Activated CD4-positive, alpha-beta memory T cell treated with anti-CD3 and anti-CD28 coated beads for 36 hours (primary cell): ENCODE measurements at regions of chr11 and their contacts with region 1.

Region 1: GRCh38 chr11:3854977-3855807 is at the start of gene STIM1:
- DNase-seq: peak; percentile 99
- H3K4me3 Mint-ChIP-seq: peak within 1 kb of the TSS; percentile 85
- H3K27ac Mint-ChIP-seq: peak within 1 kb of the TSS; percentile 99
- H3K4me1 Mint-ChIP-seq: peaks cover 53% of the 10 kb centered on the region
- H3K27me3 Mint-ChIP-seq: no peaks in the 10 kb centered on the region
- total RNA-seq, gene STIM1: 55.9 to 61.1 TPM

Region 2: DNA sequence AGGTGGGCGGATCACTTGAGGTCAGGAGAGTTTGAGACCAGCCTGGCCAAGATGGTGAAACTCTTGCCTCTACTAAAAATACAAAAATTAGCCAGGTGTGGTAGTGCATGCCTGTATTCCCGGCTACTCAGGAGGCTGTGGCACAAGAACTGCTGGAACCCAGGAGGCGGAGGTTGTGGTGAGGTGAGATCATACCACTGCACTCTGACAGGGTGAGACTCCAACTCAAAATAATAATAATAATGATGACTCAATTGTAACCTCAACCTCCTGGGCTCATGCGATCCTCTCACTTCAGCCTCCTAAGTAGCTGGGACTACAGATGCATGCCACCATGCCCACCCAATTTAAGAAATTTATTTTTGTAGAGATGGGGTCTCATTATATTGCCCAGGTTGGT is 168.4 kb before region 1 on chr11:
- CTCF ChIA-PET with region 1: no interaction called
- POLR2A ChIA-PET with region 1: no interaction called
- intact Hi-C with region 1: no loop called
- DNase-seq: no peak
- H3K4me3 Mint-ChIP-seq: no peak overlapping the region
- H3K27ac Mint-ChIP-seq: no peak overlapping the region
- H3K4me1 Mint-ChIP-seq: peaks cover 7% of the 10 kb centered on the region
- H3K27me3 Mint-ChIP-seq: no peaks in the 10 kb centered on the region

Region 3: GRCh38 chr11:3831378-3832239 is 23.6 kb before region 1 on chr11:
- CTCF ChIA-PET with region 1: interaction called, 245 read pairs
- POLR2A ChIA-PET with region 1: interaction called, 124 read pairs
- intact Hi-C with region 1: no loop called
- DNase-seq: peak; percentile 33
- H3K4me3 Mint-ChIP-seq: peak overlapping the region; percentile 53
- H3K27ac Mint-ChIP-seq: peak overlapping the region; percentile 92
- H3K4me1 Mint-ChIP-seq: peaks cover 75% of the 10 kb centered on the region
- H3K27me3 Mint-ChIP-seq: no peaks in the 10 kb centered on the region

Region 4: DNA sequence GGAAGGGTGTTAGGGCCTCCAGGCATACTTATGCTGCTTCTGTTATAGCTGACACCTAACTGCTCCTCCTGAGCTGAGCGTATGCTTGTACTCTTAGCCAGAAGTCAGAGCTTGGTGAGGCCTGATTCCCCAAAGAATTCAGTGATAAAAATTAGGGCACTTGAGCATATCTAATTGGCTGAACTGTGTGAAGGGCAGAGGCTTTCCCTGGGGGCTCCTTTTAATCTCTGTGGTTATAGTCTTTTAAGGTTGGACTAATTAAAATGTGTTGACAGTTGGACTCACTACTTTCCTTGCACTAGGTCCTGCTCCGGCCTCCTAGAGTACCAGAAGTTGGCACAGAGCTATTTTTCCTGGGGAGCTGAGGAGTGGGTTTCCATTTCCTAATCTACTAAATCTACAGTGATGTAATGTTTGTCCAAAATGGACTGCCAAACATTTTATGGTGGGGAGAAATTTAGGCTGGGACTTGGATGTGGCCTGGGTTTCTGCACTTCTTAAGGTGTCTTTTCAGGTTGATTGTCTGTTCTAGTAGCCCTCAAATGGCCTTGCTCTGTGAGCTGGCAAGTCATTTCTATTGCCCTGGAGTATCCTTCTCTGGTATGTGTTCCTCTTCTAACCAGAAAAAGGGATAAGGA is 18.6 kb after region 1 on chr11:
- CTCF ChIA-PET with region 1: interaction called, 58 read pairs
- POLR2A ChIA-PET with region 1: interaction called, 15 read pairs
- intact Hi-C with region 1: loop called (anchors 2 kb)
- DNase-seq: no peak
- H3K4me3 Mint-ChIP-seq: no peak overlapping the region
- H3K27ac Mint-ChIP-seq: no peak overlapping the region
- H3K4me1 Mint-ChIP-seq: peaks cover 66% of the 10 kb centered on the region
- H3K27me3 Mint-ChIP-seq: no peaks in the 10 kb centered on the region

Region 5: DNA sequence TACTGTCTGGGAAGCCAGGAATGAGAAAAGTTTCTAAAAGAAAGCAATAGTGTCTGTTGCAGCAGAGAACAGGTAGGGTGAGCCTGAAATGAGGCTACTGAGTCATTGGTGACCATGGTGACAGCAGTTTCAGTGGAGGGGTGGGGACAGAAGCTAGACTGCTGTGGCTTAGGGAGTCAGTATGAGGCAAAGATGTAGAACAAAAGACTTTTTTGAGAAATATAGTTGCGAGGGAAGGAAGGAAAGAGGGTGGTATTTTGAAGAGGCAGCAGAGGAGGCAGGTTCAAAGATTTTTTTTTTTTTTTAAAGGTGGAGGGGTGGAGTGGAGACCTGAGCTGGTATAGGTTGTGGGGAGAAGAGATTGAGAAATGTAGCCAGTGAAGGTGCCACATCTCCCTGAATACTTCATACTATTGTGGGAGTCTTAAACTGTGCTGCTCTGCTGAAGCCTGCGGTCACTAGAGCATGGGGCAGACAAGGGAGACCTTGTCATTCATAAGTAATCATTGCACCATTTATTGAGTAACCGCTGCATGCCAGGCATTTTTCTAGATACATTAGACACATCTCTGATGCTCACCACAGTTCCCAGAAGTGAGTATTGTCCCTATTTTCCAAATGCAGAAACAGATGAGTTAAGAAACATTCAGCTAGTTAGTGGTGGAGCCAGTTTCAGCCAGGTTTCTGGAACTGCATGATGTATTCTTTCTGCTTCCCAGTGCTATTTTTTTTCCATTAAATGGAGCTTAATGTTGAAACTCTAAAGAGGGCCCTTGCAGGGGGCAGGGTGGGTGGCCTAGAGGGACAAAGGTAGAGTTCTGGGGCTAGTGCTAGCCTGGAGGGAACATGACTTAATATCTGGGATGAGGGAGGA is 50.1 kb after region 1 on chr11:
- CTCF ChIA-PET with region 1: interaction called, 38 read pairs
- POLR2A ChIA-PET with region 1: interaction called, 5 read pairs
- intact Hi-C with region 1: loop called (anchors 1 kb)
- DNase-seq: peak; percentile 86
- H3K4me3 Mint-ChIP-seq: peak overlapping the region; percentile 35
- H3K27ac Mint-ChIP-seq: peak overlapping the region; percentile 80
- H3K4me1 Mint-ChIP-seq: peaks cover 77% of the 10 kb centered on the region
- H3K27me3 Mint-ChIP-seq: no peaks in the 10 kb centered on the region

Region 6: GRCh38 chr11:3959015-3959919 is 104.1 kb after region 1 on chr11:
- CTCF ChIA-PET with region 1: interaction called, 39 read pairs
- POLR2A ChIA-PET with region 1: interaction called, 3 read pairs
- intact Hi-C with region 1: loop called (anchors 2 kb)
- DNase-seq: no peak
- H3K4me3 Mint-ChIP-seq: no peak overlapping the region
- H3K27ac Mint-ChIP-seq: peak overlapping the region; percentile 11
- H3K4me1 Mint-ChIP-seq: peaks cover 76% of the 10 kb centered on the region
- H3K27me3 Mint-ChIP-seq: no peaks in the 10 kb centered on the region

Region 7: DNA sequence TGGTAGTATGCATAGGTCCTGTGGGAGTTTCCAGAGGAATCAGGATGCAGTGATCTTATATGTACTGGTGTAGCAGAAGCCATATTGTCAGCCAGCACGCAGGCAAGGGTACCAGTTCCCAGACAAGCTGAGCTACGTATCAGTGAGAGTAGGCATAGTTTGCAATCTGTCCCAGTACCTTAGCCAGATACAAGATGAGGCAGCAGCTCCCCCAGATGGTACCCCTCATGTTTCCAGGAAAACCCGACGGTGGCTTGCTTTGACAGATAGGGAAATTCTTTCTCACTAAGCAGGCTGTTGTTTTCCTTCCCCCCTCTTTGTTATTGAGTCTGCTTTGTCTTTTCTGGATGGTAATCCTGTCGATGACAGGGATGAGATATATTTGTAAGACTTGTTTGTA is 129.7 kb after region 1 on chr11:
- CTCF ChIA-PET with region 1: interaction called, 23 read pairs
- POLR2A ChIA-PET with region 1: interaction called, 3 read pairs
- intact Hi-C with region 1: loop called (anchors 1 kb)
- DNase-seq: peak; percentile 69
- H3K4me3 Mint-ChIP-seq: no peak overlapping the region
- H3K27ac Mint-ChIP-seq: peak overlapping the region; percentile 18
- H3K4me1 Mint-ChIP-seq: peaks cover 73% of the 10 kb centered on the region
- H3K27me3 Mint-ChIP-seq: no peaks in the 10 kb centered on the region

Region 8: DNA sequence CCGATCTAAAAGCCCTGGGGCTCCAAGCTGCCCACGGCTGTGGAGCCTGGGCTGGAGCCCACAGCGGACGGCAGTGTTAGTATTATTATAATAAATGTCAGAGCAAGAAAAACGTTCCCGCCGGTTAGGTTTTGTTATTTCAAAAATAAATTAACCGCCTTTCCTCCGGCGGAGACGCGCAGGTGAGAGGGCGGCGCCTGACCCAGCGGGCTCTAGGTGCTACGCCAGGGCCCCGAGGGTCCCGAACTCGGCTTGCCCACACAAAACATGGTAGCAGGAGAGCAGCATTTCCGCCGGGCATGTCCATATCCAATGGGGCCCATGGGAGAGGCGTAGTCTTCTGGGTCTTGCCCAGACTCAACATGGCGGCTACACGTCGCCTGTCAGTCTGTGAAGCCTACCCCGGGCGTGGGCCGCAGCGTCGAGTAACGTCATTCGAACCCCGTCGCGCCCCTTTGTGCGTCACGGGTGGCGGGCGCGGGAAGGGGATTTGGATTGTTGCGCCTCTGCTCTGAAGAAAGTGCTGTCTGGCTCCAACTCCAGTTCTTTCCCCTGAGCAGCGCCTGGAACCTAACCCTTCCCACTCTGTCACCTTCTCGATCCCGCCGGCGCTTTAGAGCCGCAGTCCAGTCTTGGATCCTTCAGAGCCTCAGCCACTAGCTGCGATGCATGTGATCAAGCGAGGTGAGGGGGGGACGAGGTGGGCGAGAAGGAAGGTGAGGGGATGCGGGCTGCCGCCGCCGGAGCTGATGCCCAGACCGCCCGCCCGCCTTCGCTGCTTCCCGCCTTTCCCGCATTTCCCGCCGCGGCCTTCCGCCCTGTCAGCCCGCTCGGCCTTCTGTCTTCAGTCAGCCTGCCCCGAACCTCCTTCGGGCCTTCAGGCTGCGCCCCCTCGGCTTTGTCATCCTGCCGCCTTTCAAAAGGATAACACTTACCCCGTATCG is 239.4 kb after region 1 on chr11 and contains the start of gene RRM1:
- CTCF ChIA-PET with region 1: interaction called, 17 read pairs
- POLR2A ChIA-PET with region 1: interaction called, 3 read pairs
- intact Hi-C with region 1: loop called (anchors 1 kb)
- DNase-seq: peak; percentile 97
- H3K4me3 Mint-ChIP-seq: peak within 1 kb of the TSS; percentile 95
- H3K27ac Mint-ChIP-seq: peak within 1 kb of the TSS; percentile 92
- H3K4me1 Mint-ChIP-seq: peaks cover 71% of the 10 kb centered on the region
- H3K27me3 Mint-ChIP-seq: no peaks in the 10 kb centered on the region
- total RNA-seq, gene RRM1: 201 to 203 TPM